HEK293 (cell line): ENCODE measurements at regions of chr5 and their contacts with region 1.

Region 1: GRCh38 chr5:57094753-57095683 is 78.8 kb upstream of the GPBP1 start:
- H3K4me3 ChIP-seq: no peak overlapping the region
- H3K27ac ChIP-seq: no peak overlapping the region
- H3K4me1 ChIP-seq: no peaks in the 10 kb centered on the region
- CTCF ChIP-seq: no peak

Region 2: GRCh38 chr5:57082441-57083067 is 12.5 kb before region 1 on chr5:
- CTCF ChIA-PET with region 1: interaction called, 11 read pairs
- POLR2A ChIA-PET with region 1: no interaction called
- H3K4me3 ChIP-seq: no peak overlapping the region
- H3K27ac ChIP-seq: no peak overlapping the region
- H3K4me1 ChIP-seq: no peaks in the 10 kb centered on the region
- CTCF ChIP-seq: no peak